Esophagus muscularis mucosa (tissue), 4 donors: ENCODE measurements at regions of chrX and their contacts with region 1.

Region 1: DNA sequence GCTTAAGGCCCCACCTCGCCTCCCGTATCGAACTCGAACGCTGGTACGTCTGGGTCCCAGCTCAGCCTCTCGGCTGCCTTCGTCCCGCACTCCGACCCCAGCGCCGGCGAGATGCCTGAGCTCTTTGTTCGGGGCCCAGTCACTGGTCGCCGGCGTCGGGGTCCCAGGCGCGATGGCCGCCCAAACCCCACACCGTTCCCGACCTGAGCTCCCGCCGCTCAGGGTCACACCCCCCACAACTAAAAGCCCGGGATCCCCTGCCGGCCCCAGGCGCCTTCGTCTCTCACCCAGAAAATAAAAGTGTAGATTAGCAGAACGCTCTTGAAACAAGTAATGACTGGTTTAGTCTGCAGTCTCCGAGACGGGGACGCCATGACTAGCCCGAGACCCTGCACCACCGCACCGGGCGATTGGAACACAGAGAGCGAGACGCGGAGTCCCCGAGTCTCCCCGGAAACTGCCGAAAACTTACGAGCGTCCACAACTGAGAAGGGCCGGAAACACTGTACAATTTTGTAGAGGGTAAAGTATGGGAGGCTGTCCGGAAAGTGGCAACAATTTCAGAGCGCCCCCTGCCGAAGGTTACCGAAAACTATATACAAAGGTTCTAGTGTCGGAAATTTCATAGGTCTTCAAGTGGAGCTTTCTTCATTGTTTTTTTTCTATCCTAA is at the start of gene TSPAN6:
- DNase-seq: peak; percentile 92
- H3K4me3 ChIP-seq: peak within 1 kb of the TSS; percentile 57 to 63 (median 60)
- H3K27ac ChIP-seq: peak within 1 kb of the TSS; percentile 56 to 68 (median 65)
- H3K4me1 ChIP-seq: peaks cover 0 to 4% (median 0%) of the 10 kb centered on the region in 4 donors
- H3K27me3 ChIP-seq: no peaks in the 10 kb centered on the region
- CTCF ChIP-seq: peak; percentile 44 to 51 (median 50)
- EP300 ChIP-seq: no peak
- POLR2A ChIP-seq: no peak
- total RNA-seq, gene TSPAN6: 5.4 to 8.3 (median 6.8) TPM

Region 2: GRCh38 chrX:100512471-100512870 is 124.0 kb before region 1 on chrX:
- intact Hi-C with region 1: loop called (anchors 5 kb)
- DNase-seq: no peak
- H3K4me3 ChIP-seq: no peak overlapping the region
- H3K27ac ChIP-seq: no peak overlapping the region
- H3K4me1 ChIP-seq: no peaks in the 10 kb centered on the region
- H3K27me3 ChIP-seq: no peaks in the 10 kb centered on the region
- CTCF ChIP-seq: peak; percentile 51 to 71 (median 63)
- EP300 ChIP-seq: no peak
- POLR2A ChIP-seq: no peak